SK-N-SH (cell line): ENCODE measurements at regions of chr11 and their contacts with region 1.

Region 1: GRCh38 chr11:96342961-96343711 is at the start of gene MAML2:
- DNase-seq: peak; percentile 94
- H3K4me3 ChIP-seq: peak within 1 kb of the TSS; percentile 84 to 90
- H3K27ac ChIP-seq: peak within 1 kb of the TSS; percentile 82 to 91
- H3K4me1 ChIP-seq: peaks cover 15 to 28% of the 10 kb centered on the region in 2 experiments; a peak in 2 of 4 replicates
- H3K27me3 ChIP-seq: no peaks in the 10 kb centered on the region
- CTCF ChIP-seq: peak; percentile 73
- EP300 ChIP-seq: no peak
- RAD21 ChIP-seq: peak; percentile 91
- polyA plus RNA-seq, gene MAML2: 20.1 and 24.5 TPM in 2 replicates

Region 2: DNA sequence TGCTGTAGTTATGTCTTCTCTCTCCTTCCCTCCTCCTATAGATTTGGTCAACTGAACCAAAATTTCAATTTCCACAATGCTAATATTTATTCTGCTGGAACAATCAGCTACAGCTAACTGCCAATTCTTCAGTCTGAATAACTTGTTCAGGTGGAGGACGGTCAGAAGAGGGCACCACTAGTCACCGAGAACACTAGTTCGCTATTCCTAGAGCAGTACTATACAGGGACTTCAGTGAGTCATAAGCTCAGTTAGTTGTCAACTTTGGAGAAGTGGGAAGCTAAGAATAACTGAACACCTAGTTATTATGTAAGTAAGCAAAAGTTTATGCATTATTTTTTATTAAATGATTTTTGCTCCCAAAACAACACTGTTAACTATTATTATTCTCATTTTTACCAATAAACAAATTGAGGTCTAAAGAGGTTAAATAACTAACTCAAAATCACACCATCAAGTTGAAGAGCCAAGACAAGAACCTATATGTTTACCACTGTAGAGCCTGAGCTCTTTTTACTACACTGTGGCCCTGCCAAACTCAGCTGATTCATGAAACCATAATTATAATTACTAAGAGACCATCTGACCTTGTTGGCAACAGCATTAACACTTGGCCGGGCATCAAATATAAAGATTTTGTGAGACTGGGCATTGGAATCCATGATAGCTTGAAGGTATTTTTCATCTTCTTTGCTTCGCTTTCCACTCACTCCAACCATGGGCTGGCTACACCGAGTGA is 493.9 kb before region 1 on chr11:
- CTCF ChIA-PET with region 1: interaction called, 18 read pairs
- POLR2A ChIA-PET with region 1: no interaction called
- DNase-seq: peak; percentile 22
- H3K4me3 ChIP-seq: no peak overlapping the region; a peak in 1 of 4 replicates
- H3K27ac ChIP-seq: peak overlapping the region in 1 of 2 experiments; percentile 45; a peak in 2 of 4 replicates
- H3K4me1 ChIP-seq: peaks cover 0 to 6% of the 10 kb centered on the region in 2 experiments; a peak in 2 of 4 replicates
- H3K27me3 ChIP-seq: no peaks in the 10 kb centered on the region
- CTCF ChIP-seq: peak; percentile 70
- EP300 ChIP-seq: no peak
- RAD21 ChIP-seq: peak; percentile 64

Region 3: GRCh38 chr11:96045622-96046456 is 297.3 kb before region 1 on chr11:
- CTCF ChIA-PET with region 1: interaction called, 15 read pairs
- POLR2A ChIA-PET with region 1: no interaction called
- DNase-seq: peak; percentile 24
- H3K4me3 ChIP-seq: 0 out of 4 replicates have a peak overlapping the region, but pooled peaks of 1 of the 2 experiments have one; percentile 9
- H3K27ac ChIP-seq: peak overlapping the region; percentile 72 to 86
- H3K4me1 ChIP-seq: peaks cover 10 to 18% of the 10 kb centered on the region in 2 experiments; a peak in 2 of 4 replicates
- H3K27me3 ChIP-seq: no peaks in the 10 kb centered on the region
- CTCF ChIP-seq: peak; percentile 50
- EP300 ChIP-seq: peak; percentile 18 to 63; a peak in 1 of 4 replicates
- RAD21 ChIP-seq: peak; percentile 44

Region 4: GRCh38 chr11:96075532-96075959 is 267.6 kb before region 1 on chr11:
- CTCF ChIA-PET with region 1: interaction called, 12 read pairs
- POLR2A ChIA-PET with region 1: no interaction called
- DNase-seq: no peak
- H3K4me3 ChIP-seq: no peak overlapping the region
- H3K27ac ChIP-seq: peak overlapping the region; percentile 11 to 67
- H3K4me1 ChIP-seq: peaks cover 24 to 28% of the 10 kb centered on the region in 2 experiments
- H3K27me3 ChIP-seq: no peaks in the 10 kb centered on the region
- CTCF ChIP-seq: no peak
- EP300 ChIP-seq: no peak
- RAD21 ChIP-seq: no peak

Region 5: GRCh38 chr11:96331699-96332116 is 11.4 kb before region 1 on chr11:
- CTCF ChIA-PET with region 1: interaction called, 16 read pairs
- POLR2A ChIA-PET with region 1: no interaction called
- DNase-seq: no peak
- H3K4me3 ChIP-seq: no peak overlapping the region
- H3K27ac ChIP-seq: peak overlapping the region in 1 of 2 experiments; percentile 59; a peak in 1 of 4 replicates
- H3K4me1 ChIP-seq: peaks cover 0 to 51% of the 10 kb centered on the region in 2 experiments
- H3K27me3 ChIP-seq: no peaks in the 10 kb centered on the region
- CTCF ChIP-seq: no peak
- EP300 ChIP-seq: no peak
- RAD21 ChIP-seq: no peak

Region 6: GRCh38 chr11:96393753-96394348 is 50.7 kb after region 1 on chr11:
- CTCF ChIA-PET with region 1: interaction called, 13 read pairs
- POLR2A ChIA-PET with region 1: no interaction called
- DNase-seq: peak; percentile 45
- H3K4me3 ChIP-seq: peak overlapping the region in 1 of 2 experiments; percentile 25; a peak in 1 of 4 replicates
- H3K27ac ChIP-seq: peak overlapping the region; percentile 16 to 22; a peak in 3 of 4 replicates
- H3K4me1 ChIP-seq: peaks cover 11 to 14% of the 10 kb centered on the region in 2 experiments; a peak in 3 of 4 replicates
- H3K27me3 ChIP-seq: no peaks in the 10 kb centered on the region
- CTCF ChIP-seq: peak; percentile 81
- EP300 ChIP-seq: no peak
- RAD21 ChIP-seq: peak; percentile 72